Activated T-helper 2 cell treated with anti-CD3 and anti-CD28 coated beads, Interferon-gamma antibody, Interleukin-2, Interleukin-4, amounts not matched to agents 10 μg/mL and 5 μg/mL and 100 μg/mL, durations not matched to agents 14 hours and 24 hours and 36 hours (primary cell): ENCODE measurements at regions of chr4 and their contacts with region 1.

Region 1: DNA sequence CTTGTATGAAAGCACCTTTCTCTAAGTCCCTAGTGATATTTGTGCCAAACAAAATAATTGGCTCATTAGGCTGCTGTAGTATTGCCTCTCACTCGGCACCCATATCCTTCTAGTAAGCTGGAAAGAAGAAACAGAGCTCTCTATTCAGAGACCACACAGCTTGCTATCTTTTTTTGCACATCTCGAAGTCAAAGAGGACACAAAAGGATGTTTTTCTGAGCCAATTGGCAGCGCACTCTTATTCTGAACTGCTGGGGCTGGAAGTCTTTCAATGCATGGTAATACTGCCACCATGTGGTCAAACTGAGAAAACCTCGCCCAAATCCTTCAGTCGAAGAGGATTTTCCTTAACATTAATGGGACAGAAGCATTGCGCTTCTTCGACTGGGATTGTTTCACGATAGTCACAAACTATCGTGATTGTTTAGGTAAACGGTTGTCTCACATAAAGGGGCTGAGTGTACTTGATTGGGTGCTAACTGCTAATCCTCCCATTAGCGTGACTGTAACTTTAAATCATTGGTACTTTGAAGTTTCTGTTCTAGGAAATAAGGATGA is 572.0 kb upstream of the LCORL start:
- DNase-seq: peak; percentile 14
- H3K4me3 Mint-ChIP-seq: no peak overlapping the region
- H3K27ac Mint-ChIP-seq: no peak overlapping the region
- H3K4me1 Mint-ChIP-seq: peaks cover 3% of the 10 kb centered on the region
- H3K27me3 Mint-ChIP-seq: peaks cover 2% of the 10 kb centered on the region

Region 2: DNA sequence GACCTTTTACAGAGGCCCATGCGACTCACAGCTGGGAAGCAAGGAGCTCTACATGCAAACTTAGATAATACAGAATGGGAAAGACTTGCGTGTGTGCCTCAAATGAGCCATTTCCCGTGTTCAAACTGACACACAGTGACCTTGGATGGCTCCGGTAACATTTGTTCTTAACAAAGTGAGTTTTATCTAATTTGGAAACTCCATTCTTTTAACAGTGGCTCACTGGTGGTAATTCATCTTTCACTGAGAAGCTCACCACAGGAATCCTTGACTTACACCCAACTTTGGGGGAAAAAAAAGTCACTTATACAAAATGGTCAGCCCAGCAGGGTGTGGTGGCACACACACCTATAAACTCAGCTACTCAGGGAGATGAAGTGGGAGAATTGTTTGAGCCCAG is 1885.7 kb before region 1 on chr4:
- intact Hi-C with region 1: no loop called
- DNase-seq: no peak
- H3K4me3 Mint-ChIP-seq: no peak overlapping the region
- H3K27ac Mint-ChIP-seq: no peak overlapping the region
- H3K4me1 Mint-ChIP-seq: no peaks in the 10 kb centered on the region
- H3K27me3 Mint-ChIP-seq: peaks cover 3% of the 10 kb centered on the region

Region 3: DNA sequence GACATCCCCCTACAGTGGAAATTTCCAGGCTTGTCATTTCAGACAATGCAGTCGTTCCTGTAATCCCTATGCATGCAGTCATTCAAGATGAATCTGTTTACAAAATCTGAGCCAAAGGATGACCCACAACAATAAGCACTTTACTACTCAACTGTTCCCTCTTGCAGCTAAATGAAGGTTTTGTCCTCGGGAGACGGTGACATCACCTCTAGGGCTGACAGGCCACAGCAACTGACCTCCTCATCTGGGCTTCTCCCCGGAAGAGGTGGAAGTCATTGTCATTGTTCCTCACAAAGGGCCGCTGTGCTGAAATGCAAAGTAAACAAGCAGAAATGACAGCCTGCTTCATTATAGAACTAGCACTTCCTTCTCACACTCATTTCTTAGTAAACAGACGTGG is 1049.3 kb before region 1 on chr4:
- intact Hi-C with region 1: loop called (anchors 1 kb)
- DNase-seq: no peak
- H3K4me3 Mint-ChIP-seq: no peak overlapping the region
- H3K27ac Mint-ChIP-seq: no peak overlapping the region
- H3K4me1 Mint-ChIP-seq: peaks cover 6% of the 10 kb centered on the region
- H3K27me3 Mint-ChIP-seq: peaks cover 16% of the 10 kb centered on the region

Region 4: DNA sequence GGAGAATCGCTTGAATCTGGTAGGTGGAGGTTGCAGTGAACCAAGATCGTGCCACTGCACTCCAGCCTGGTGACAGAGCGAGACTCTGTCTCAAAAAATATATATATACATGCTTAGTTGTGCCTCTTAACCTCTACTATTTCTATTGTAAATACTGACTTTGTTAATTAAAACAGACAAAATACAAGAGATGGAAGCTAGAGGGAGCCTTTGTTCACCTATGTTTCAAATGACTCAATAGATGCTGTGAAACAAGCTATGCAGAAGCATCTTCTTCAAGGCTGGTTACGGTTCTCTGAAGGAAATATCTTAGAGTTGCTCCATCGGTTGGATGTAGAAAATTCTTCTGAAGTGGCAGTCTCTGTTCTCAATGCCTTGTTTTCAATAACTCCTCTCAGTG is 776.5 kb before region 1 on chr4:
- intact Hi-C with region 1: loop called (anchors 1 kb)
- DNase-seq: no peak
- H3K4me3 Mint-ChIP-seq: peak overlapping the region; percentile 49
- H3K27ac Mint-ChIP-seq: no peak overlapping the region
- H3K4me1 Mint-ChIP-seq: peaks cover 56% of the 10 kb centered on the region
- H3K27me3 Mint-ChIP-seq: no peaks in the 10 kb centered on the region

Region 5: DNA sequence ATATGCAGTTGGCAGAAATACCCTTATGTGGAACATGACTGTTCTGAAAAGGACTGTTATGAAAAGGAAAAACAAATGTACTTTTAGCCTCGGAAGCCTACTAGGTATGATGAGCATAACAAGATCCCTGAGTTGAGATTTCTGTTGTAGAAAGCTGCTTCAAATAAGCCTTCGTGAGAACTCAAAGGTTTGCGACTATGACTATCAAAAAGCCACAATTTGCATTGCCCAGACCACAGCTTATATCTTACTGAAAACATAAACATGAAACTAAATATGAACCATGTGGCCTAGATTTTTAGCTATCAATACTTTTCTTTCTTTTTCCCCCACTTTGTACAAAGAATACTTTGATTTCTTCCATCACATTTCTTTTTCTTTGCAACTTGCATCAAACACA is 173.7 kb before region 1 on chr4:
- intact Hi-C with region 1: no loop called
- DNase-seq: no peak
- H3K4me3 Mint-ChIP-seq: no peak overlapping the region
- H3K27ac Mint-ChIP-seq: no peak overlapping the region
- H3K4me1 Mint-ChIP-seq: no peaks in the 10 kb centered on the region
- H3K27me3 Mint-ChIP-seq: no peaks in the 10 kb centered on the region